ENCODE measurements at regions of chr2 and their contacts with region 1.

Region 1: GRCh38 chr2:130824492-130825061 is 12.1 kb upstream of the ARHGEF4 start:
- DNase-seq: peak; percentile 83
- H3K4me3 Mint-ChIP-seq: peak overlapping the region; percentile 39
- H3K27ac Mint-ChIP-seq: peak overlapping the region; percentile 90
- H3K4me1 Mint-ChIP-seq: peaks cover 21% of the 10 kb centered on the region
- H3K27me3 Mint-ChIP-seq: no peaks in the 10 kb centered on the region

Region 2: GRCh38 chr2:130231656-130232055 is 592.9 kb before region 1 on chr2:
- CTCF ChIA-PET with region 1: no interaction called
- POLR2A ChIA-PET with region 1: no interaction called
- intact Hi-C with region 1: no loop called
- DNase-seq: no peak
- H3K4me3 Mint-ChIP-seq: no peak overlapping the region
- H3K27ac Mint-ChIP-seq: no peak overlapping the region
- H3K4me1 Mint-ChIP-seq: no peaks in the 10 kb centered on the region
- H3K27me3 Mint-ChIP-seq: peaks cover 3% of the 10 kb centered on the region

Region 3: GRCh38 chr2:130727286-130728018 is 97.1 kb before region 1 on chr2:
- CTCF ChIA-PET with region 1: no interaction called
- POLR2A ChIA-PET with region 1: no interaction called
- intact Hi-C with region 1: loop called (anchors 1 kb)
- DNase-seq: peak; percentile 95
- H3K4me3 Mint-ChIP-seq: peak overlapping the region; percentile 70
- H3K27ac Mint-ChIP-seq: peak overlapping the region; percentile 55
- H3K4me1 Mint-ChIP-seq: peaks cover 9% of the 10 kb centered on the region
- H3K27me3 Mint-ChIP-seq: peaks cover 1% of the 10 kb centered on the region

Region 4: DNA sequence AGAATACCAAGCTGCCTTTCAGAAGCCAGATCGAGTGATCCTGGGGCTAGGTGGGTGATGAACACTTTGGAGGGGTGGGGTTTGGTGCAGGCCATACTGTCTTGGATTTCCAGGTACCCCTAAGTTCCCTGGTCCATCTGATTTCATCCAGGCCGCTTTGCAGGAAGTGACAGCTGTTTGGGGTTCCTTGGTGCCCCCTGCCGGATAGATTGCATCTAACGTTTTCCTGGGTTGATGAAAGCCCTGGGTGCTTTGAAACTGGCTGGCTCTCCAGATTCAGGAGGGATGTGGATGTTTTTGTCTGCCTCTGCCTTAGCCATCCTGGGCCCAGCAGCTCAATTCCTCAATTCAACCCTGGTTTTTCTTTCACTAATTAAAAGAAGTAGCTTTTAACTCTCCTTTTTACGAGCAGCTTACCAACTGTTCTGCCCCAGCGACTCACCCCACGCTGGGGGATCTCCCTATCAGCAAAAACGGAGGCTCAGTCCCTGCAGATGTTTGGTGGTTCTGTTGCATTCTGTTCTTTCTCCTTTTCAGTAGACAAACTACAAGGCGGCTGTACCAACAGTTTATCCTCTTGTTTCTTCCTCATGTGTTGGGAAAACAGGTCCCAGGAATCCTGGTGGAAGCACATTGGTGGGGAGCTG is 49.2 kb after region 1 on chr2:
- CTCF ChIA-PET with region 1: interaction called, 21 read pairs
- POLR2A ChIA-PET with region 1: no interaction called
- intact Hi-C with region 1: no loop called
- DNase-seq: peak; percentile 83
- H3K4me3 Mint-ChIP-seq: no peak overlapping the region
- H3K27ac Mint-ChIP-seq: no peak overlapping the region
- H3K4me1 Mint-ChIP-seq: no peaks in the 10 kb centered on the region
- H3K27me3 Mint-ChIP-seq: peaks cover 6% of the 10 kb centered on the region

Region 5: GRCh38 chr2:131093006-131093695 is 268.6 kb after region 1 on chr2 and contains the start of gene FAM168B:
- CTCF ChIA-PET with region 1: no interaction called
- POLR2A ChIA-PET with region 1: no interaction called
- intact Hi-C with region 1: loop called (anchors 5 kb)
- DNase-seq: peak; percentile 92
- H3K4me3 Mint-ChIP-seq: peak within 1 kb of the TSS; percentile 96
- H3K27ac Mint-ChIP-seq: peak within 1 kb of the TSS; percentile 96
- H3K4me1 Mint-ChIP-seq: peaks cover 15% of the 10 kb centered on the region
- H3K27me3 Mint-ChIP-seq: no peaks in the 10 kb centered on the region
- total RNA-seq, gene FAM168B: 50.5 to 57.1 TPM